ENCODE measurements at regions of chr19 and their contacts with region 1.

Region 1: GRCh38 chr19:18408053-18408476 is 10.6 kb upstream of the LRRC25 start:
- DNase-seq: peak; percentile 69
- ATAC-seq: peak; percentile 20
- H3K4me3 Mint-ChIP-seq: no peak overlapping the region
- H3K27ac Mint-ChIP-seq: no peak overlapping the region
- H3K4me1 Mint-ChIP-seq: no peaks in the 10 kb centered on the region
- H3K27me3 Mint-ChIP-seq: peaks cover 7% of the 10 kb centered on the region

Region 2: GRCh38 chr19:18340190-18340989 is 67.7 kb before region 1 on chr19 and contains the start of gene PGPEP1:
- CTCF ChIA-PET with region 1: interaction called, 4 read pairs
- POLR2A ChIA-PET with region 1: no interaction called
- intact Hi-C with region 1: loop called in 1 of 2 experiments (anchors 2 kb)
- DNase-seq: peak; percentile 78
- ATAC-seq: peak; percentile 53
- H3K4me3 Mint-ChIP-seq: peak within 1 kb of the TSS; percentile 69
- H3K27ac Mint-ChIP-seq: peak within 1 kb of the TSS; percentile 93
- H3K4me1 Mint-ChIP-seq: peaks cover 19% of the 10 kb centered on the region
- H3K27me3 Mint-ChIP-seq: no peaks in the 10 kb centered on the region
- total RNA-seq, gene PGPEP1: 20.0 to 20.9 TPM

Region 3: DNA sequence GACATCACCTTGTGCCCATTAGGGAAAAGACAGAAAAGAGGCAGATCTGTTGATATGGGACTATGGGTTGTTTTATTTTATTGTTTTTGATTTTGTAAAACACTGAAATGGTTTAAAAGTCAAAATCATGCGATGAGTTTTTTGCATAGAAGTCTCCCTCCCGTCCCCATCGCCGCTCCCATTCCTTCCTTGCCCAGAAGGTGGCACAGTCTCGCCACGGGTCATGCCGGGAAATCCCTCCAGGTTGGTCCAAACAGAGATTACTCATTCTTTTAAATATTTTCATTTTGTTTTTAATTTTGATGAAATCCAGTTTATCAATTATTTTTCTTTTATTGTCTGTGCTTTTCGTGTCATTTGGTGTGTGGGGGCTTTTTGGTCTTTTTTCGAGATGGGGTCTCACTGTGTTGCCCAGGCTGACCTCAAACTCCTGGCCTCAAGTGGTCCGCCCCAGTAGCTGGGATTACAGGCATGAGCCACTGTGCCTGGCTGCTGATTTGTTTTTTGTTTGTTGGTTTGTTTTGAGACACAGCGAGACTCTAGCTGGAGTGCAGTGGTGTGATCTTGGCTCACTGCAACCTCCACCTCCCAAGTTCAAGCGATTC is 58.4 kb before region 1 on chr19:
- CTCF ChIA-PET with region 1: interaction called, 6 read pairs
- POLR2A ChIA-PET with region 1: no interaction called
- intact Hi-C with region 1: loop called (anchors 1 to 2 kb)
- DNase-seq: peak; percentile 70
- ATAC-seq: no peak
- H3K4me3 Mint-ChIP-seq: no peak overlapping the region
- H3K27ac Mint-ChIP-seq: no peak overlapping the region
- H3K4me1 Mint-ChIP-seq: no peaks in the 10 kb centered on the region
- H3K27me3 Mint-ChIP-seq: no peaks in the 10 kb centered on the region

Region 4: DNA sequence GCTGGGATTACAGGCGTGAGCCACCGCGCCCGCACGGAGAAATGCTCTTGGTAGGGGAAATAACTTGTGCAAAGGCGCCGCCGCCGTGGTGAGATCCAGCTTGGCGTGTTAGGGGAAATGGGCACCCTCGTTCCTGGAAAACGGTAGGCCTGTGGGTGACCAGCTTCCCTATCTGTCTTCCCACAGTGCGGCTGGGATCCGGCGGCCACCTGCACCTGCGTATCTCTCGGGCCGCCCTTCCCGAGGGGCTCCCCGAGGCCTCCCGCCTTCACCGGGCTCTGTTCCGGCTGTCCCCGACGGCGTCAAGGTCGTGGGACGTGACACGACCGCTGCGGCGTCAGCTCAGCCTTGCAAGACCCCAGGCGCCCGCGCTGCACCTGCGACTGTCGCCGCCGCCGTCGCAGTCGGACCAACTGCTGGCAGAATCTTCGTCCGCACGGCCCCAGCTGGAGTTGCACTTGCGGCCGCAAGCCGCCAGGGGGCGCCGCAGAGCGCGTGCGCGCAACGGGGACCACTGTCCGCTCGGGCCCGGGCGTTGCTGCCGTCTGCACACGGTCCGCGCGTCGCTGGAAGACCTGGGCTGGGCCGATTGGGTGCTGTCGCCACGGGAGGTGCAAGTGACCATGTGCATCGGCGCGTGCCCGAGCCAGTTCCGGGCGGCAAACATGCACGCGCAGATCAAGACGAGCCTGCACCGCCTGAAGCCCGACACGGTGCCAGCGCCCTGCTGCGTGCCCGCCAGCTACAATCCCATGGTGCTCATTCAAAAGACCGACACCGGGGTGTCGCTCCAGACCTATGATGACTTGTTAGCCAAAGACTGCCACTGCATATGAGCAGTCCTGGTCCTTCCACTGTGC is 19.7 kb before region 1 on chr19:
- CTCF ChIA-PET with region 1: interaction called, 33 read pairs
- POLR2A ChIA-PET with region 1: no interaction called
- intact Hi-C with region 1: loop called (anchors 1 kb)
- DNase-seq: peak; percentile 88
- ATAC-seq: peak; percentile 86
- H3K4me3 Mint-ChIP-seq: peak overlapping the region; percentile 67
- H3K27ac Mint-ChIP-seq: no peak overlapping the region
- H3K4me1 Mint-ChIP-seq: peaks cover 4% of the 10 kb centered on the region
- H3K27me3 Mint-ChIP-seq: peaks cover 45% of the 10 kb centered on the region

Region 5: GRCh38 chr19:18436671-18437490 is 28.8 kb after region 1 on chr19:
- CTCF ChIA-PET with region 1: no interaction called
- POLR2A ChIA-PET with region 1: no interaction called
- intact Hi-C with region 1: no loop called
- DNase-seq: peak; percentile 80
- ATAC-seq: peak; percentile 62
- H3K4me3 Mint-ChIP-seq: peak overlapping the region; percentile 63
- H3K27ac Mint-ChIP-seq: no peak overlapping the region
- H3K4me1 Mint-ChIP-seq: peaks cover 21% of the 10 kb centered on the region
- H3K27me3 Mint-ChIP-seq: no peaks in the 10 kb centered on the region

Measured in activated CD4-positive, alpha-beta T cell treated with anti-CD3 and anti-CD28 coated beads for 36 hours (primary cell).